Left cardiac atrium (tissue), 4 donors: ENCODE measurements at regions of chr10 and their contacts with region 1.

Region 1: GRCh38 chr10:104406715-104407650 is 53.4 kb downstream of the CFAP58 start:
- DNase-seq: no peak
- ATAC-seq: peak in 1 of 2 donors; percentile 56

Region 2: DNA sequence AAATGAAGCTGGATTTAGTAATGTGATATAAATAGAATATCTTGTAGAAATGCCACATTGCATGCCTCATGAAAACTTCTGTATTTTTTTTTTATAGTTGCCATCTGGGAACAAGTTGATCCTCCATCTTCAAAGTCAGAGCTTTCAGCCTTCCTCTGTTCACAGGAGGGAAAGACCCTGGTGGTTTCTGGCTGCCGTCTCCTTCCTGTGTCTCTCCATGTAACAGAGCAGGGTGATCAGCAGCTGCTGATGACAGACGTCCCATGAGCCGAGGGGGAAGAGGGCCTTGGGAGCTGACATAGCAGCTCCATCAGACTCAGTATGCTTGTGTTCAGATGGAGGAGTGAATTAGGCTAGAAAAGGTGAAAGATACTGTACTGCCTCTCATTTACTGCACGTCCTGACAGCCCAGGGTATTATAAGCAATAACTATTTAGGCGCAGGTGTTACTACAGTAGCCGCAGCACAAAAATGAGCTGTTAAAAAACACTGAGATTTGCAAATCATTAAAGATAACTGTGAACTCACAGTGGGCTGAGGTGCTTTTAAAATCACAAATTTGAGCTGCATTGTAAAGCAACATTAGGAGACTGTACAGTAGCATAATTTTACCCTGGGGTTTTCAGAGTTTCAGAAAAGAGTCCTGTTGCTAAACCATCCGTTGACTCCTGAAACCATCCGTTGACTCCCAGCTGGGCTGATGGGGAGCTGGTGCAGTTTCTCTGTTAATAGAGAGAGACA is 50.0 kb after region 1 on chr10:
- intact Hi-C with region 1: no loop called
- DNase-seq: no peak
- ATAC-seq: peak in 1 of 2 donors; percentile 30

Region 3: DNA sequence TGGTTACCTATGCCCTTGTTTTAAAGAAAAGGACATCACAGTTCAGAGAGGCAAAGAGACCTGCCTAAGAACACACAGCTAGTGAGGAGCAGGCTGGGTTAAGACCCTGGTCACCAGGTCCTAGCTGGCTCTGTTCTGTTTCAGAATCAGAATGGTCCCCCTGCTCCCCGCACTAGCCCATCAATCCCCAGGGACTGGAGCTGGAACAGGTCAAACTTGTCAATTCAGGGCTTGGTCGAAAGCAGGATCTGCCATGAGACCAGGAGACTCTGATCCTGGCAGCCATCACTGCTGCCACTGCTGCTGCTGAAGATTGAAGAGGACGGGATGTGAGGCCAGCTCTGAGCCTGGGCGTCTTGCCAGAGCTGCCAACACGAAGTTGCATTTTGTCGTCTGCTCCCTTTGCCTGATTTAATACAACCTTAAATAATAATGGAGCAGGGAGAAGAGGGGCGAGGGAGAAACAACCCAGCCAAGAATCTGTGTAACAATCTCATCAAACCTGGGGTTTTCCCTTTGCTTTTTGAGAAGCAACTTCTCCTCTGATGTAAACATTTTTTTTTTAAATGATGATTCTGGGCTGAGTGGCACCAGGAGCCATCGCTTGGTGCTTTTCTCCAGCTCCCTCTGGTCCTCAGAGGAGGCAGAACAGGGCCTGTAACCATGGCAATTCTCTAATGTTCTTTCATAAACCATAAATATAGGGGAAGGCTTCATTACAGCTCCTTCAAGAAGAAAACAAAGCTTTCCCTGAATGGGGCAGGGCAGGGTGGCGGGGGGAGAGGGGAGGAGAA is 115.1 kb after region 1 on chr10:
- intact Hi-C with region 1: no loop called
- DNase-seq: peak; percentile 31
- ATAC-seq: peak; percentile 61 to 65

Region 4: GRCh38 chr10:104622598-104623209 is 215.7 kb after region 1 on chr10:
- intact Hi-C with region 1: loop called (anchors 1 to 5 kb)
- DNase-seq: no peak
- ATAC-seq: no peak

Region 5: DNA sequence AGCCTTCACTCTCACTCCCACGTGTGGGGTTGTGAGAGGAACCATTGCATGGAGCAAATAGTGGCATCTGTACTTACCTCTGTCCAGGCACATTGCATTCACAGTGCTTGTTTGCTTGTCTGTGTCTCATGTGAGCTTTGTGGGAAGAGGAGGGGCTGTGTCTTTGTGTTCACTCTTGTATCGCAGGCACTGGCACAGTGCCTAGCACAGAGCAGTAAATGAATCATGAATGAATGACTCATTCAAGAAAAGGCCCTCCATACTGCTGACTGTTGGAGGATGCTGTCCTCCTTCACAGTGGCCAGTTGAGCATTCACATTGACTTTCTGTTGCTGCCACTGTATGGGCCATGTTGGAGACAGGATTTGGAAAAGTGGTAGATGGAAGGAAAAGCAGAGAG is 359.4 kb after region 1 on chr10:
- intact Hi-C with region 1: no loop called
- DNase-seq: no peak
- ATAC-seq: peak in 1 of 2 donors; percentile 44